ENCODE measurements at regions of chr11 and their contacts with region 1.

Region 1: GRCh38 chr11:130434521-130435223 is 6.3 kb upstream of the ADAMTS8 start:
- DNase-seq: peak; percentile 76
- H3K4me3 ChIP-seq: peak overlapping the region; percentile 52
- CTCF ChIP-seq: peak; percentile 84

Region 2: DNA sequence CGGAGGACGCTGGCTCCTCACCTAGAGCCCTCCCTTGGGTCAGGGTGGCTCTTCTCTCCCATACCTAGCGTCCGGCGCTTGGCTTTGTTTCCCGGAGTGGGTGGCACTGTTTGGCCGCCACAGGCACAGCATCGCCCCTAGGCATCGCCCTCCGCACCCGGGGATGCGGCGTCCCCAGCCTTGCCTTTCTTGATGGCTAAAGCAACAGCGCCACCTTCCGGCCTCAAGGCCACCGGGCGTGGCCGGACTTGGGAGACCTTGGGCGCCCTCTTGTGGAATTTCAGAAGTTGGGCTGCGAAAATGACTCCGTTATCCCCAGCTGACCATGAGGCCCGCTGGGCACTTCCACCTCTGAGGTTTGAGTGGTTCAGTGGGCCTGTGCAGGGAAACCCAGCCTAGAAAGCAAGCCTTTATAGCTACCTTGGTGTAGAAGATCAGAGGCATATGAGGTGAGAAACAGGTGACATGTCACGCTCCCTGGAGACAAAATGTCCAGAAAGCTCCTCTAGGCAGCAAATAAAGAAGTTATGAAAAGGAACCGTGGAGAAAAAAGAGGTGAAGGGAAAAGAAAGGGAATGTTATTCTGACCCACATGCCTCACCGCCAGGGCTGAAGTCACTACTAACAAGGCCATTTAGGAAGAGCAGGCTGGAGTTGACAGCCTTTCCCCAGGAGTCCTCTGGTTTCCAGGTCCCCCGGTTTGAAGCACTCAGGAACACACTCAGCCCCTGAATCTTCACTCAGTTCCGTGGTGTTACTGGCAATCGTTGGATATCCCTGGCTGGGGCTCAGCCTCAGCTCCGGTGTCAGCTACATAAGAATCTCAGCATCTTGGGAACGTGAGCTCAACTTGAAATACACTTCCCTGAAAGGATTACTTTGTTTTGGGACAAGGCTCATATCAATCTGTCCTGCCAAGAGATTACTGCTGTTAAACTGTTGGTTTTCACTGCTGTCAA is 427.5 kb after region 1 on chr11:
- in situ Hi-C with region 1: loop called (anchors 5 kb)
- DNase-seq: peak; percentile 95
- H3K4me3 ChIP-seq: no peak overlapping the region
- CTCF ChIP-seq: peak; percentile 99